Aorta (tissue), 5 donors: ENCODE measurements at regions of chr11 and their contacts with region 1.

Region 1: DNA sequence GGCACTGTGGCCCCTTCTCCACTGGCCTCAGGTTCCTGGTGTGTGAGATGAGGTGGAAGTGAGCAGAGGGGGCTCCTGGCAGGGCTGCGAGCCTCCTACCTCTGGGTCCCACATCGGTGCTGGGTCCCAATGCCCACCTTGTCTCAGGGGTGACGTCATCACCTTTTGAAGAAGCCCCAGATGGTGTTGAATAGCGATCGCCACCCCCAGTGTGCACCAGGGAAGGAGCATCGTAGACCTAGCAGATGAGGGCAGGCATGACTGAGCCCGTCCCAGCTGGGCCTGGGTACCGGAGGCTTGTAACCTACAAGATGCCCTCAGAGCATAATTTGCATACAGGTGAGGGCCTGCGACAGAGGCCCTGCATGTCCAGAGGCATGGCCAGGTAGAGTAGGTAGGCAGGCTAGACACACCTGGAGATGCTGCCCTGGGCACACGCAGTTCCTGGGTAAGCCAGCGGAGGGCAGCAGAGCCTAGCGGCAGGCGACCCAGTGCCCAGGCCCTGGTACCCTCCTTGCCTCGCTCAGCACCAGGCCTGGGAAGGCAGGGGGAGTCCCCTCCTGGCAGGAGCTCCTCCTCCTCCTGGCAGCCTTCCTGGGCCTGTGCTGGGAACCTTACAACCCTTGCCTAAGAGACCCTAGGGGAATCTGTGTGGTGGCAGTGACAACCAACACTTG is 52.5 kb downstream of the TPCN2 start:
- DNase-seq: peak; percentile 88 to 92
- ATAC-seq: peak; percentile 90
- H3K4me3 ChIP-seq: no peak overlapping the region
- H3K27ac ChIP-seq: no peak overlapping the region
- H3K4me1 ChIP-seq: no peaks in the 10 kb centered on the region
- H3K27me3 ChIP-seq: no peaks in the 10 kb centered on the region

Region 2: DNA sequence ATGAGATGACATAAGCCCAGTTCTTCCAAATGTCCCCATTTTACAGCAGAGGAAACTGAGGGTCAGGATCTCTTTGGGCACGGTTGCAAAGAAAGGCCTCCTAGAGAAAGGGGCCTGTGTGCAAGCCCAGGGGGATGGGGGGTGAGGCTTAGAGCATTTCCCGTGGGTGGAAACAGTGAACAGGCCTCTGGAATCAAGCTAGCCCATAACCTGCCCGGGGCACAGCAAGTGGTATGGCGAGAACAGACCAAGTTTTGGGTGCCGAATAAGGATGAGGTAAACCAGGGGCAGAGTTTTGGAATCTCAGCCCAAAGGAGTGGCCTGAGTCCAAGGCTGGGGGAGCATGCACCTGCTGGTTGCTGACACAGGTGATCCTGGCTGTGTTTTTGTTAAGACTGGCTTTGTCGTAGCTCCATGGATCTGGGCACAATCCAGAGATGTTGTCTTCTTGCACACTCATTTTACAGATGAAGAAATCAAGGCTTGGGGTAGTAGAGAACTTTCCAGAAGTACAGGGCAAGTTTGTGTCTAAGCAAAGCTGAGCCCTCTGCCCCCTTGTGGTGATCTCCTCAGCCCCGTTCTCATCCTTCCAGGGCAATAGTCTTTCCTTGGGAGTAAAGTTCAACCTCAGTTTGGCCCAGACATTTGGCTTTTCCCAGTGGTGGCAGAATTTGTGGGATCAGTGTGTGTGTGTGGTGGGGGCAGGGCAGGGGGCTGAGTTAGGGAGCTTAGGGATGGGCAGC is 139.2 kb after region 1 on chr11:
- intact Hi-C with region 1: loop called in 1 of 2 experiments (anchors 10 kb)
- DNase-seq: peak in 1 of 2 donors; percentile 41
- ATAC-seq: no peak
- H3K4me3 ChIP-seq: no peak overlapping the region
- H3K27ac ChIP-seq: no peak overlapping the region
- H3K4me1 ChIP-seq: no peaks in the 10 kb centered on the region
- H3K27me3 ChIP-seq: no peaks in the 10 kb centered on the region

Region 3: DNA sequence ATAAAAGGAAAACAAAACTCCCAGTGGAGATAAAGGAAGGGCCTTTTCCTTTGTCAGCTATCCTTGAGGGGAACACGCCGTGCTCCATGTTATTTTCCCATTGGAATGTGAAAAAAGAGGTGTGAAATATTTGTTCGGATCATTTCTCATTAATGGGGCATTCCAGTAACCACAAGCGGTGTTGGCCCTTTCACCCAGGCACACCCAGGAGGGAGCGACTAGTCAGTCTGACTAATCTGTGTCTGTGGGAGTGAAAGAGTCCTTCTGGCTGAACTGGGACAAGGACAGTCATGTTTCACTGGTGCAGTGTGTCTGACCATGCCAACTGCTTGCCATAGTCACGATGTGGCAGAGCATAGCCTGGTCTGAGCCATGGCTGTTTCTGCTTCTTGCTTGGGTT is 179.7 kb after region 1 on chr11:
- intact Hi-C with region 1: no loop called
- DNase-seq: no peak
- ATAC-seq: no peak
- H3K4me3 ChIP-seq: no peak overlapping the region
- H3K27ac ChIP-seq: no peak overlapping the region
- H3K4me1 ChIP-seq: no peaks in the 10 kb centered on the region
- H3K27me3 ChIP-seq: no peaks in the 10 kb centered on the region

Region 4: DNA sequence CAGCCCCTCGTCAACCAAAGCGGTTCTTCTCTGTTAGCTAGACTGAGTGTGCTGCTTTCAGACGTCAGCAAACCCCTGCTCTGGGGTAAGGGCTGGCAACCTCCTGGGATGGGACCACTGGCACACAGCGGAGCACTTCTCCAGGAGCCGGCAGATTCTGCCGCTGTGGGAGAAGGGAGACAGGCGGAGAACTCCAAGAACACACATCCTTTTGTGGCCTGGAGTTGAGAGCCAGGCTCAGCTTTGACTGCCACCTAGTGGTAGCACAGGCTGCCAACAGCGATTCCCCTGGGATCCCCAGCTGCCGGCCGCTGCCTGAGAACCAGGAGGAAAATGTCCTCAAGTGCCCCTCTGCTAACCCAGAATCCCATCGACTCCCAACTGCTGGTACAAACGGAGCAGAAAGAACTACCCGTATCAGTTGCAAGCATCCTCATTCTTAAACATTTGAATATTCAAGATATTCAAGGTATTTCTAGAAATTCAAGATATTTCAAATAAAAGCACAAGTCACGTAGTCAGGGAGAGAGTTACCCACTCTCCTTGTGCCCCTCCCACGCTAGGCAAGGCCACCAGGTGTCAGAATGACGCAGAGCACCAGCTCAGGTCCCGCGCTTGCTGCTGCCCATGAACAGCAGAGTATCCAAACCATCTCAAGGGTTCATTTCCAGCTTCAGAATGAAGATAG is 569.0 kb after region 1 on chr11:
- intact Hi-C with region 1: loop called (anchors 2 kb)
- DNase-seq: peak; percentile 87 to 96
- ATAC-seq: peak; percentile 86
- H3K4me3 ChIP-seq: no peak overlapping the region
- H3K27ac ChIP-seq: no peak overlapping the region
- H3K4me1 ChIP-seq: no peaks in the 10 kb centered on the region
- H3K27me3 ChIP-seq: no peaks in the 10 kb centered on the region